CD4-positive, alpha-beta memory T cell (primary cell): ENCODE measurements at regions of chr1 and their contacts with region 1.

Region 1: GRCh38 chr1:183975651-183976050 is 61.9 kb downstream of the COLGALT2 start:
- DNase-seq: no peak
- H3K4me3 ChIP-seq: no peak overlapping the region
- H3K4me3 Mint-ChIP-seq: no peak overlapping the region
- H3K27ac ChIP-seq: no peak overlapping the region
- H3K27ac Mint-ChIP-seq: no peak overlapping the region
- H3K4me1 ChIP-seq: no peaks in the 10 kb centered on the region
- H3K4me1 Mint-ChIP-seq: peaks cover 0 to 4% (median 0%) of the 10 kb centered on the region in 4 donors
- H3K27me3 ChIP-seq: no peaks in the 10 kb centered on the region
- H3K27me3 Mint-ChIP-seq: peaks cover 0 to 2% of the 10 kb centered on the region in 2 donors

Region 2: DNA sequence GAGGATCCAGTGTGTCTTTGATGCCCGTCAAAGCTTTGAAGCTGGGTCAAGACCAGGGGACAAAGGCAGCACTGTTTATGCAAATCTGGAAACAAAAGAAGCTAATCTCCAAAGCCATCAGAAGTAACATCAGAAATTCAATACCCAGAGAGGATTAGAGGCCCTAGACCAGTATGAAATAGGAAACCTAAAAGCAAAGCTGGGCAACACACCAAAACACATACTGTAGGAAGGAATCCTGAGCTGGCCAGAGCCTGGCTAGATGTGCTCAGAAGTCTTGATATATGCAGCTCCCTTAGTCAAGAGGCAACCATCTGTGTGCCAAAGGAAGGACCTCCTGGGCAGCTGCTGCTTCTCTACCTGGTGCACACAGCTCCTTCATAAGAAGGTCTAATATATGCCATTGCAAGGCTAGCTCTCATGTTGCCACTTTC is 49.6 kb after region 1 on chr1:
- CTCF ChIA-PET with region 1: no interaction called
- POLR2A ChIA-PET with region 1: no interaction called
- intact Hi-C with region 1: loop called (anchors 5 kb)
- DNase-seq: no peak
- H3K4me3 ChIP-seq: no peak overlapping the region
- H3K4me3 Mint-ChIP-seq: no peak overlapping the region
- H3K27ac ChIP-seq: no peak overlapping the region
- H3K27ac Mint-ChIP-seq: no peak overlapping the region
- H3K4me1 ChIP-seq: no peaks in the 10 kb centered on the region
- H3K4me1 Mint-ChIP-seq: no peaks in the 10 kb centered on the region
- H3K27me3 ChIP-seq: no peaks in the 10 kb centered on the region
- H3K27me3 Mint-ChIP-seq: peaks cover 3 to 4% of the 10 kb centered on the region in 2 donors